B cell (primary cell): ENCODE measurements at regions of chr3 and their contacts with region 1.

Region 1: GRCh38 chr3:30606301-30607031 is at the start of gene TGFBR2:
- DNase-seq: peak; percentile 91
- ATAC-seq: peak; percentile 73
- H3K4me3 ChIP-seq: peak within 1 kb of the TSS; percentile 90 to 99 (median 96)
- H3K4me3 Mint-ChIP-seq: peak within 1 kb of the TSS; percentile 97
- H3K27ac ChIP-seq: peak within 1 kb of the TSS; percentile 94 to 95
- H3K27ac Mint-ChIP-seq: peak within 1 kb of the TSS; percentile 97
- H3K4me1 ChIP-seq: peaks cover 65 to 76% of the 10 kb centered on the region in 2 donors
- H3K4me1 Mint-ChIP-seq: peaks cover 73% of the 10 kb centered on the region
- H3K27me3 ChIP-seq: no peaks in the 10 kb centered on the region
- H3K27me3 Mint-ChIP-seq: no peaks in the 10 kb centered on the region
- CTCF ChIP-seq: no peak
- total RNA-seq, gene TGFBR2: 189 and 199 TPM in 2 replicates

Region 2: GRCh38 chr3:30199096-30199759 is 407.2 kb before region 1 on chr3:
- CTCF ChIA-PET with region 1: interaction called, 4 read pairs
- POLR2A ChIA-PET with region 1: no interaction called
- intact Hi-C with region 1: loop called (anchors 10 kb)
- DNase-seq: peak; percentile 65
- ATAC-seq: peak; percentile 43
- H3K4me3 ChIP-seq: no peak overlapping the region
- H3K4me3 Mint-ChIP-seq: no peak overlapping the region
- H3K27ac ChIP-seq: no peak overlapping the region
- H3K27ac Mint-ChIP-seq: no peak overlapping the region
- H3K4me1 ChIP-seq: peaks cover 0 to 3% of the 10 kb centered on the region in 2 donors
- H3K4me1 Mint-ChIP-seq: peaks cover 15% of the 10 kb centered on the region
- H3K27me3 ChIP-seq: no peaks in the 10 kb centered on the region
- H3K27me3 Mint-ChIP-seq: no peaks in the 10 kb centered on the region
- CTCF ChIP-seq: peak; percentile 96

Region 3: GRCh38 chr3:30332196-30333021 is 274.1 kb before region 1 on chr3:
- CTCF ChIA-PET with region 1: interaction called, 3 read pairs
- POLR2A ChIA-PET with region 1: interaction called, 4 read pairs
- intact Hi-C with region 1: loop called (anchors 5 kb)
- DNase-seq: peak; percentile 9
- ATAC-seq: peak; percentile 83
- H3K4me3 ChIP-seq: peak overlapping the region in 2 of 5 experiments; percentile 5 to 21
- H3K4me3 Mint-ChIP-seq: peak overlapping the region; percentile 83
- H3K27ac ChIP-seq: peak overlapping the region in 1 of 2 donors; percentile 43
- H3K27ac Mint-ChIP-seq: peak overlapping the region; percentile 79
- H3K4me1 ChIP-seq: peaks cover 9 to 11% of the 10 kb centered on the region in 2 donors
- H3K4me1 Mint-ChIP-seq: peaks cover 21% of the 10 kb centered on the region
- H3K27me3 ChIP-seq: no peaks in the 10 kb centered on the region
- H3K27me3 Mint-ChIP-seq: no peaks in the 10 kb centered on the region
- CTCF ChIP-seq: no peak

Region 4: DNA sequence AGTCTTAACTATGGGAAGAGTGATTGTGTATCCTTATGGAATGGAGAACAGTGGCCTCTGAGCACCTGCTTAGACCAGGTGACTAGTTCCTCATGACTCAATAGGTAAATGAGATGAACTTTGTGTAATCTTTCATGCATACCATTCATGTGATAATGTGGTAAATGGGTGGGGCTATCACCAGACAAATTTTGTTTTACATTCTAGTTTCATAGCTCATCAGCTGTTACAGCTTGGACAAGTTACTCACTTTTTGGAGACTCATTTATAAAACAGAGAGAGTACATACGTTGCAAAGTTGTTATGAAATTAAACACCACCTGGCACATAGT is 103.8 kb before region 1 on chr3:
- CTCF ChIA-PET with region 1: interaction called, 6 read pairs
- POLR2A ChIA-PET with region 1: interaction called, 5 read pairs
- intact Hi-C with region 1: loop called (anchors 2 kb)
- DNase-seq: peak; percentile 86
- ATAC-seq: peak; percentile 83
- H3K4me3 ChIP-seq: no peak overlapping the region
- H3K4me3 Mint-ChIP-seq: peak overlapping the region; percentile 77
- H3K27ac ChIP-seq: peak overlapping the region; percentile 70 to 77
- H3K27ac Mint-ChIP-seq: peak overlapping the region; percentile 93
- H3K4me1 ChIP-seq: peaks cover 37 to 40% of the 10 kb centered on the region in 2 donors
- H3K4me1 Mint-ChIP-seq: peaks cover 59% of the 10 kb centered on the region
- H3K27me3 ChIP-seq: no peaks in the 10 kb centered on the region
- H3K27me3 Mint-ChIP-seq: no peaks in the 10 kb centered on the region
- CTCF ChIP-seq: no peak

Region 5: DNA sequence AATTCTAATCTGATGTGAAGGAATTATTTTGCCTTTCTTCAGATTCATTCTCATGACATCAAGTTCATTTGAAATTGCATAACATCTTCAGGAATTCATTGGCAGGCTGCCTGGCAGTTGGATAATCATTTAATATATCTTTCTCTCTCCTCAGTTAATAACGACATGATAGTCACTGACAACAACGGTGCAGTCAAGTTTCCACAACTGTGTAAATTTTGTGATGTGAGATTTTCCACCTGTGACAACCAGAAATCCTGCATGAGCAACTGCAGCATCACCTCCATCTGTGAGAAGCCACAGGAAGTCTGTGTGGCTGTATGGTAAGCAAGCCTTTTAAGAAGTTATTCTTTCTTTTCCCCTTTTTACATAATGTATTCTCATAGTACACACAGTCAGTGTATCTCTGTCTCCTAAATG is 38.1 kb after region 1 on chr3:
- CTCF ChIA-PET with region 1: interaction called, 4 read pairs
- POLR2A ChIA-PET with region 1: interaction called, 11 read pairs
- intact Hi-C with region 1: loop called (anchors 5 kb)
- DNase-seq: peak; percentile 75
- ATAC-seq: peak; percentile 48
- H3K4me3 ChIP-seq: peak overlapping the region in 2 of 5 experiments; percentile 11 to 48
- H3K4me3 Mint-ChIP-seq: peak overlapping the region; percentile 70
- H3K27ac ChIP-seq: peak overlapping the region; percentile 89 to 90
- H3K27ac Mint-ChIP-seq: peak overlapping the region; percentile 87
- H3K4me1 ChIP-seq: peaks cover 95 to 98% of the 10 kb centered on the region in 2 donors
- H3K4me1 Mint-ChIP-seq: peaks cover 89% of the 10 kb centered on the region
- H3K27me3 ChIP-seq: no peaks in the 10 kb centered on the region
- H3K27me3 Mint-ChIP-seq: no peaks in the 10 kb centered on the region
- CTCF ChIP-seq: no peak

Region 6: DNA sequence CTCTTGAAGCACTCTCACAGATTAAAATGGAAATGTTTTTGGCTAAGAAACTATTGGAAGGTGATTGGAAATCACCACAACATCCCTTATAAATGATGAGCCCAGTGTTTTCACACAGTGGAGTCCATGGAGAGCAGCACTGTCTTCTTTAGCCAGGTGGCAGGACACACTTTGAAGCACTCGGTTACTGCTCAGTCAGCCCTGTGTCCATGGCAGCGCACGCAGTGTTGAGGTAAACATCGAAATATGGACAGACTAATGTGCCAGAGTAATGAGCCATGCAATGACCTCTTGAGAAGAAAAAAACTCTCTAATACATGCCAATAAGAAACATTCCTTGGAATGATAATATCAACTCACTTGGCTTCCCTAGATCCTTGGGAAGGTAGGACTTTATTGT is 66.5 kb after region 1 on chr3:
- CTCF ChIA-PET with region 1: no interaction called
- POLR2A ChIA-PET with region 1: no interaction called
- intact Hi-C with region 1: no loop called
- DNase-seq: no peak
- ATAC-seq: peak; percentile 12
- H3K4me3 ChIP-seq: peak overlapping the region in 1 of 5 experiments; percentile 2
- H3K4me3 Mint-ChIP-seq: no peak overlapping the region
- H3K27ac ChIP-seq: peak overlapping the region; percentile 8 to 77
- H3K27ac Mint-ChIP-seq: peak overlapping the region; percentile 81
- H3K4me1 ChIP-seq: peaks cover 41 to 46% of the 10 kb centered on the region in 2 donors
- H3K4me1 Mint-ChIP-seq: peaks cover 83% of the 10 kb centered on the region
- H3K27me3 ChIP-seq: no peaks in the 10 kb centered on the region
- H3K27me3 Mint-ChIP-seq: no peaks in the 10 kb centered on the region
- CTCF ChIP-seq: no peak

Region 7: DNA sequence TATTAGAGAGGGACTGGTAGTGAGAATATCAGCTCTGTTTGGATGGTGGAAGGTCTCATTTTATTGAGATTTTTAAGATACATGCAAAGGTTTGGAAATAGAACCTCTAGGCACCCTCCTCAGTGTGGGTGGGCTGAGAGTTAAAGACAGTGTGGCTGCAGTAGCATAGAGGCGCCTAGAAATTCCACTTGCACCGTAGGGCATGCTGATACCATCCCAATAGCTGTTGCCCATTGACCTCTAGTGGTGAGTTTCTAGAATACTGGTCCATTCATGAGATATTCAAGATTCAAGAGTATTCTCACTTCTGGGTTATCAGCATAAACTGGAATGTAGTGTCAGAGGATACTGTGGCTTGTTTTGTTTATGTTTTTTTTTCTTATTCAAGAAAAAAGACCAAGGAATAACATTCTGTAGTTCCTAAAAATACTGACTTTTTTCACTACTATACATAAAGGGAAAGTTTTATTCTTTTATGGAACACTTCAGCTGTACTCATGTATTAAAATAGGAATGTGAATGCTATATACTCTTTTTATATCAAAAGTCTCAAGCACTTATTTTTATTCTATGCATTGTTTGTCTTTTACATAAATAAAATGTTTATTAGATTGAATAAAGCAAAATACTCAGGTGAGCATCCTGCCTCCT is 87.1 kb after region 1 on chr3:
- CTCF ChIA-PET with region 1: interaction called, 17 read pairs
- POLR2A ChIA-PET with region 1: no interaction called
- intact Hi-C with region 1: loop called (anchors 1 kb)
- DNase-seq: peak; percentile 77
- ATAC-seq: peak; percentile 87
- H3K4me3 ChIP-seq: no peak overlapping the region
- H3K4me3 Mint-ChIP-seq: no peak overlapping the region
- H3K27ac ChIP-seq: peak overlapping the region in 1 of 2 donors; percentile 48
- H3K27ac Mint-ChIP-seq: peak overlapping the region; percentile 80
- H3K4me1 ChIP-seq: peaks cover 29 to 32% of the 10 kb centered on the region in 2 donors
- H3K4me1 Mint-ChIP-seq: peaks cover 74% of the 10 kb centered on the region
- H3K27me3 ChIP-seq: no peaks in the 10 kb centered on the region
- H3K27me3 Mint-ChIP-seq: no peaks in the 10 kb centered on the region
- CTCF ChIP-seq: peak; percentile 96